ENCODE measurements at regions of chr16 and their contacts with region 1.

Region 1: GRCh38 chr16:22077700-22078313 is 14.5 kb upstream of the VWA3A start:
- DNase-seq: peak; percentile 89
- ATAC-seq: peak; percentile 67
- H3K4me3 Mint-ChIP-seq: no peak overlapping the region
- H3K27ac Mint-ChIP-seq: no peak overlapping the region
- H3K4me1 Mint-ChIP-seq: peaks cover 2% of the 10 kb centered on the region
- H3K27me3 Mint-ChIP-seq: no peaks in the 10 kb centered on the region
- CTCF ChIP-seq: peak; percentile 93

Region 2: DNA sequence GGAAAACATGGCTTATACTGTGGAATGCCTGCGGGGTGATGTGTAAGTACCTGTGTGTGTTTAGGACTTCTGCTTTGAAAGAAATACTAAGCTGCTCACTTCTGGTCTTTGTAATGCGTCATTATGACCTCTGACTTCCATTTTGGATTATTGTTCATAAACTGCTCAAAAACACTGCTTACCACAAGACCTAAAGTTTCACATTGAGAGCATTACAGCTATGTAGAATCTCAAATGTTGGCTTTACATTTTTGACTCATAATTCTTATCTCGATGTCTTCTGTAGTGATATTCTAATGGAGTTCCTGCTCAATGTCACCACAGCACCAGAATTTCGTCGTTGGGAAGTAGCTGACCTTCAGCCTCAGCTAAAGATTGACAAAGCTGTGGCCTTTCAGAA is 115.3 kb before region 1 on chr16:
- CTCF ChIA-PET with region 1: interaction called, 10 read pairs
- POLR2A ChIA-PET with region 1: no interaction called
- intact Hi-C with region 1: no loop called
- DNase-seq: no peak
- ATAC-seq: no peak
- H3K4me3 Mint-ChIP-seq: no peak overlapping the region
- H3K27ac Mint-ChIP-seq: no peak overlapping the region
- H3K4me1 Mint-ChIP-seq: peaks cover 19% of the 10 kb centered on the region
- H3K27me3 Mint-ChIP-seq: no peaks in the 10 kb centered on the region
- CTCF ChIP-seq: no peak

Region 3: DNA sequence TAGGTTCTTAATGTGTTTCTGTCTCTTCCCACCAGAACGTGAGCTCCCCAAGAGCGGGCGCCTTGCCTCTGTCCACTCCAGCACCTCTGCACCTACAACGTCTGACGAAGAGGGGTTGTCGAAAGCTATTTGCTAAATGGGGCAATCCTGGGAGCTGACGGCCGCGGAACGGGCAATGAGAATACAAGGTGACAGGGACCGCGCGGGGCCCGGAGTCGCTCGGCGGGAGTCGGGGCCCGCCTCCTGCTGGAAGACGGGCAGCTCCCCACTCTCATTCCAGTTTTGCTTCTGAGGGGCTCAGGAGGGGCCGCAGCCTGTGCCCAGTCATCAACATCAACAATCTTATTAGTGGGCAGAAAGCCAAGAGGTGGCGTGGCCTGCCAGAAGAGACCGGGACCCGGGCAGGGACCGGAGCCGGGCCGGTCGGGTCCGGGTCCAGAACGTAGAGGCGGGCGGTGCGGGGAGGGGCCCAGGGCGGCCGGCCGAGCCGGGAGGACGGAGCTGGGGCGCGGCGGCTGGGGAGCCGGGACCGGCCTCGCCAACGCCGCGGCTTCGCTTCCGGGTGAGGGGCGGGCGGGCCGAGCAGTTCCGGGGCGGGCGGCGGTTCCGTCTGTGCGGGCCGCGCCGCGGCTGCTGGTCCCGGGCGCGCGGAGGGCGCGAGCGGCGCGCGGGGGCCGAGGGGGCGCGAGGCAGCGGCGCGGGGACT is 70.1 kb before region 1 on chr16 and contains the start of gene MOSMO:
- CTCF ChIA-PET with region 1: interaction called, 430 read pairs
- POLR2A ChIA-PET with region 1: interaction called, 9 read pairs
- intact Hi-C with region 1: loop called (anchors 2 kb)
- DNase-seq: peak; percentile 63
- ATAC-seq: peak; percentile 81
- H3K4me3 Mint-ChIP-seq: peak within 1 kb of the TSS; percentile 86
- H3K27ac Mint-ChIP-seq: peak within 1 kb of the TSS; percentile 82
- H3K4me1 Mint-ChIP-seq: peaks cover 42% of the 10 kb centered on the region
- H3K27me3 Mint-ChIP-seq: no peaks in the 10 kb centered on the region
- CTCF ChIP-seq: no peak
- total RNA-seq, gene MOSMO: 5.4 to 7.0 TPM

Region 4: GRCh38 chr16:22035153-22035552 is 42.7 kb before region 1 on chr16:
- CTCF ChIA-PET with region 1: interaction called, 24 read pairs
- POLR2A ChIA-PET with region 1: no interaction called
- intact Hi-C with region 1: no loop called
- DNase-seq: no peak
- ATAC-seq: no peak
- H3K4me3 Mint-ChIP-seq: no peak overlapping the region
- H3K27ac Mint-ChIP-seq: no peak overlapping the region
- H3K4me1 Mint-ChIP-seq: peaks cover 26% of the 10 kb centered on the region
- H3K27me3 Mint-ChIP-seq: no peaks in the 10 kb centered on the region
- CTCF ChIP-seq: no peak

Region 5: GRCh38 chr16:22091758-22092600 is 14.2 kb after region 1 on chr16 and contains the start of gene VWA3A:
- CTCF ChIA-PET with region 1: interaction called, 44 read pairs
- POLR2A ChIA-PET with region 1: no interaction called
- intact Hi-C with region 1: no loop called
- DNase-seq: no peak
- ATAC-seq: no peak
- H3K4me3 Mint-ChIP-seq: no peak within 1 kb of the TSS
- H3K27ac Mint-ChIP-seq: no peak within 1 kb of the TSS
- H3K4me1 Mint-ChIP-seq: no peaks in the 10 kb centered on the region
- H3K27me3 Mint-ChIP-seq: peaks cover 6% of the 10 kb centered on the region
- CTCF ChIP-seq: no peak
- total RNA-seq, gene VWA3A: not detected

Region 6: GRCh38 chr16:22190776-22191531 is 113.1 kb after region 1 on chr16:
- CTCF ChIA-PET with region 1: interaction called, 81 read pairs
- POLR2A ChIA-PET with region 1: interaction called, 6 read pairs
- intact Hi-C with region 1: no loop called
- DNase-seq: peak; percentile 100
- ATAC-seq: peak; percentile 71
- H3K4me3 Mint-ChIP-seq: peak overlapping the region; percentile 94
- H3K27ac Mint-ChIP-seq: peak overlapping the region; percentile 100
- H3K4me1 Mint-ChIP-seq: peaks cover 59% of the 10 kb centered on the region
- H3K27me3 Mint-ChIP-seq: peaks cover 2% of the 10 kb centered on the region
- CTCF ChIP-seq: no peak

Region 7: DNA sequence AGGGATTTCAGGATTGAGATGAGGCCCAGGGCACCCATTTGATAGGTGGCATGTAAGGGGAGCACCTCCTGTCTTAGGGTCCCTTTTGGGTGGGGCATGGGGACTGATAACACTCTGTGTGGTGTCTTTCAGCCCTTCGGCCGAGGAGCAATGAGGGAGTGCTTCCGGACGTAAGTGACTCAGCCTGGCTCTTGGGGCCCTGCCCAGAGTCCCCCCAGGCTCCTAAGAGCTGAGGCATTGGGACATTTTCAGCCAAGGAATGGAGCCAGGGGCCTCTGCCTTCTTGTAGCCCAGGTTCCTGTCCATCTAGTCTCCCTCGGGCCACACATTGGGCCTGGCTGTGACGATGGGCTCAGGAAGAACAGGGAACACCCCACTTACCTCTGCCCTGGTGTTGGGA is 172.7 kb after region 1 on chr16:
- CTCF ChIA-PET with region 1: no interaction called
- POLR2A ChIA-PET with region 1: no interaction called
- intact Hi-C with region 1: no loop called
- DNase-seq: no peak
- ATAC-seq: no peak
- H3K4me3 Mint-ChIP-seq: no peak overlapping the region
- H3K27ac Mint-ChIP-seq: no peak overlapping the region
- H3K4me1 Mint-ChIP-seq: no peaks in the 10 kb centered on the region
- H3K27me3 Mint-ChIP-seq: no peaks in the 10 kb centered on the region
- CTCF ChIP-seq: no peak